Activated CD4-positive, alpha-beta memory T cell treated with anti-CD3 and anti-CD28 coated beads for 36 hours (primary cell): ENCODE measurements at regions of chr7 and their contacts with region 1.

Region 1: DNA sequence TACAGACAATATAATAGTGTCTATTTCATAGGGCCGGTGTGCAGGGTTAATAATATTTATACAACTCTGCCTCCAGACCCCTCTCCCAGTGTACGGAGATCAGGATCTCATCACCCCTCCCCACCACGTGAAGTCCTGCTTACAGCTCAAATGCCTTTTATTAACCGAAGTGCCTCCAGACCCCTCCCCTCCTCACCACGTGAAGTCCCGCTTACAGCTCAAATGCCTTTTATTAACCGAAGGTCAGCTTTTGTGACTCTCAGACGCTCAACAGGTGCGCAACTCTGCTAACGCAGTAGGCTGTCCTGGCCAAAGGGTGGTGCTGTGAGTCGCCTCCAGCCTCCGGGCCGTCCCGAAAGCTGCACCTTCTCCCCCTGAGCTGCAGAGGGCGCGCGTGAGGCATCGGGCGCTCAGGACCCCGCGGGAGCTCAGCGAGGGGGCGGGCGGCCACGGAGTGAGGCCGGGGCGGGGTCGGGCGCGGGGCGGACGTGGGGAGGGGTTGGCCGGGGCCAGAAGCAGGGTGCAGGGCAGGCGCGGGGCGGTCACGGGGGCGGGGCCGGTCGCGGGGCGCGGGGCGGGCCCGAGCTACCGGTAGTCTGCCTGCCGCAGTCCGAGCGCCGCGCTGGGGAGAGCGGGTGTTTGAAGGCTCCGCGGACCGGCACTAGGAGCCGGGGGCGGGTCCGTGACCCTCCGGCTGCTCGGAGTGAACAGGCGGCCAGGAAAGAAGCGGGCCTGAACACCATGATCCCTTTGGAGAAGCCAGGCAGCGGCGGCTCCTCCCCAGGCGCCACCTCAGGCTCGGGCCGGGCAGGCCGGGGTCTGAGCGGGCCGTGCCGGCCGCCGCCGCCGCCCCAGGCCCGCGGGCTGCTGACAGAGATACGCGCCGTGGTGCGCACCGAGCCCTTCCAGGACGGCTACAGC is at the start of gene STK17A:
- DNase-seq: peak; percentile 97
- H3K4me3 Mint-ChIP-seq: peak within 1 kb of the TSS; percentile 95
- H3K27ac Mint-ChIP-seq: peak within 1 kb of the TSS; percentile 98
- H3K4me1 Mint-ChIP-seq: peaks cover 20% of the 10 kb centered on the region
- H3K27me3 Mint-ChIP-seq: peaks cover 5% of the 10 kb centered on the region
- total RNA-seq, gene STK17A: 58.2 to 62.6 TPM

Region 2: DNA sequence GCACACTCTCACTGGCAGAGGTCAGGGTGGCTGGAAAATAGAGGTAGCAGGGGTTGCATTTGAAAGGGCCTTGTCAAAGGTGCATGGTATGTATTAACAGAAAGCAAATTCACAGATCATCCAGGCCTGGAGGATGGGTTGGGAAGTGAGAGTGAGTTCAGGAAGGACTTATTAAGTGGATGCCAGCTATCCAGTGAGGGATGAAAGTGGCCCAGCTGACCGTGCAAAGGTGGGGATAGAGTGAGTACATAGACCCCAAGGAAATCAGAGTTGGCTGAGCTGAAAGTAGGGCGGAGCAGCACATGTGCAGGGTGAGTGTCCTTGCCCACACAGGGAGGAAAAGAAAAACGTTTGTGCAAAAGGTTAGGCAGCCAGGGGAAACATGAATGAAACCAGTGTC is 412.2 kb before region 1 on chr7:
- CTCF ChIA-PET with region 1: no interaction called
- POLR2A ChIA-PET with region 1: no interaction called
- intact Hi-C with region 1: no loop called
- DNase-seq: no peak
- H3K4me3 Mint-ChIP-seq: no peak overlapping the region
- H3K27ac Mint-ChIP-seq: no peak overlapping the region
- H3K4me1 Mint-ChIP-seq: no peaks in the 10 kb centered on the region
- H3K27me3 Mint-ChIP-seq: peaks cover 20% of the 10 kb centered on the region

Region 3: GRCh38 chr7:43572516-43573049 is 10.2 kb before region 1 on chr7:
- CTCF ChIA-PET with region 1: interaction called, 86 read pairs
- POLR2A ChIA-PET with region 1: interaction called, 9 read pairs
- intact Hi-C with region 1: loop called (anchors 1 kb)
- DNase-seq: peak; percentile 67
- H3K4me3 Mint-ChIP-seq: no peak overlapping the region
- H3K27ac Mint-ChIP-seq: peak overlapping the region; percentile 44
- H3K4me1 Mint-ChIP-seq: peaks cover 26% of the 10 kb centered on the region
- H3K27me3 Mint-ChIP-seq: no peaks in the 10 kb centered on the region

Region 4: GRCh38 chr7:43631559-43631958 is 48.8 kb after region 1 on chr7:
- CTCF ChIA-PET with region 1: interaction called, 42 read pairs
- POLR2A ChIA-PET with region 1: interaction called, 5 read pairs
- intact Hi-C with region 1: no loop called
- DNase-seq: no peak
- H3K4me3 Mint-ChIP-seq: no peak overlapping the region
- H3K27ac Mint-ChIP-seq: peak overlapping the region; percentile 60
- H3K4me1 Mint-ChIP-seq: peaks cover 78% of the 10 kb centered on the region
- H3K27me3 Mint-ChIP-seq: no peaks in the 10 kb centered on the region

Region 5: GRCh38 chr7:43674584-43675436 is 92.0 kb after region 1 on chr7:
- CTCF ChIA-PET with region 1: interaction called, 41 read pairs
- POLR2A ChIA-PET with region 1: interaction called, 14 read pairs
- intact Hi-C with region 1: no loop called
- DNase-seq: no peak
- H3K4me3 Mint-ChIP-seq: no peak overlapping the region
- H3K27ac Mint-ChIP-seq: peak overlapping the region; percentile 52
- H3K4me1 Mint-ChIP-seq: peaks cover 80% of the 10 kb centered on the region
- H3K27me3 Mint-ChIP-seq: no peaks in the 10 kb centered on the region

Region 6: DNA sequence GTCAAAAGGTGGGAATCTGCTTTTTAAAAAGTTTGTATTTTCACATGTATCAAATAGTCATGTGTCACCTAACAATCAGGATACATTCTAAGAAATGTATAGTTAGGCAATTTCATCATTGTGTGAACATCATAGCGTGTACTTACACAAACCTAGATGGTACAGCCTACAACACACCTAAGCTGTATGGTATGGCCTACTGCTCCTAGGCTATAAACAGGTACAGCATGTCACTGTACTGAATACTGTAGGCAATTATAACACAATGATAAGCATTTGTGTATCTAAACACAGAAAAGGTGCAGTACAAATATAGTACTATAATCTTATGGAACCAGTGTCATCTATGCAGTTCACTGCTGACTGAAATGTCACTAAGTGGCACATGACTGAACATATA is 128.7 kb after region 1 on chr7:
- CTCF ChIA-PET with region 1: interaction called, 43 read pairs
- POLR2A ChIA-PET with region 1: interaction called, 3 read pairs
- intact Hi-C with region 1: no loop called
- DNase-seq: no peak
- H3K4me3 Mint-ChIP-seq: no peak overlapping the region
- H3K27ac Mint-ChIP-seq: no peak overlapping the region
- H3K4me1 Mint-ChIP-seq: peaks cover 13% of the 10 kb centered on the region
- H3K27me3 Mint-ChIP-seq: no peaks in the 10 kb centered on the region

Region 7: GRCh38 chr7:43758029-43758821 is 175.5 kb after region 1 on chr7 and contains the start of gene BLVRA:
- CTCF ChIA-PET with region 1: interaction called, 20 read pairs
- POLR2A ChIA-PET with region 1: interaction called, 4 read pairs
- intact Hi-C with region 1: no loop called
- DNase-seq: peak; percentile 76
- H3K4me3 Mint-ChIP-seq: peak within 1 kb of the TSS; percentile 82
- H3K27ac Mint-ChIP-seq: no peak within 1 kb of the TSS
- H3K4me1 Mint-ChIP-seq: peaks cover 47% of the 10 kb centered on the region
- H3K27me3 Mint-ChIP-seq: peaks cover 13% of the 10 kb centered on the region
- total RNA-seq, gene BLVRA: 46.1 to 47.4 TPM

Region 8: GRCh38 chr7:43834463-43835251 is 251.9 kb after region 1 on chr7:
- CTCF ChIA-PET with region 1: interaction called, 173 read pairs
- POLR2A ChIA-PET with region 1: interaction called, 4 read pairs
- intact Hi-C with region 1: loop called (anchors 1 kb)
- DNase-seq: peak; percentile 64
- H3K4me3 Mint-ChIP-seq: peak overlapping the region; percentile 77
- H3K27ac Mint-ChIP-seq: peak overlapping the region; percentile 65
- H3K4me1 Mint-ChIP-seq: peaks cover 31% of the 10 kb centered on the region
- H3K27me3 Mint-ChIP-seq: no peaks in the 10 kb centered on the region